Panc1 (cell line): ENCODE measurements at regions of chr12 and their contacts with region 1.

Region 1: GRCh38 chr12:101299931-101300330 is 20.0 kb downstream of the UTP20 start:
- DNase-seq: no peak
- ATAC-seq: no peak
- H3K4me3 ChIP-seq: no peak overlapping the region
- H3K27ac ChIP-seq: no peak overlapping the region
- H3K4me1 ChIP-seq: no peaks in the 10 kb centered on the region
- H3K27me3 ChIP-seq: no peaks in the 10 kb centered on the region
- CTCF ChIP-seq: no peak

Region 2: DNA sequence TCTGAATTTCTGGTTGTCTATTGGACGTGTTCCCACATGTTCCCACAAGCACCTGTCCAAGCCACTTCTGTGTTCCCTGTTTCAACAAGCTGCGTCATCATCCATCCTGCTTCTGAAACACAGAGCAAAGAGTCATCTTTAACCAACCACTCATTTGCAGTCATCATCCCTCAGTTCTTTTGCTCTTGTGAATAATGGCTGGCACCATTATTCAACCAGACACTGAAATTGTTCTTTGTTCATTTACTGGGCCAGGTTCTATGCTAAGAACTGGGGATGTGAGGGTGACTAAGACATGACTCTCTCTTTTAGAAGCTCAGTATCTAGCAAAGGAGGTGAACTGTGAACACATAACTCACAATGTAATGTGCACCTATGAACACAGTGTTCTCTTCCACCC is 546.1 kb before region 1 on chr12:
- CTCF ChIA-PET with region 1: no interaction called
- POLR2A ChIA-PET with region 1: no interaction called
- in situ Hi-C with region 1: no loop called
- intact Hi-C with region 1: no loop called
- DNase-seq: no peak
- ATAC-seq: no peak
- H3K4me3 ChIP-seq: no peak overlapping the region
- H3K27ac ChIP-seq: no peak overlapping the region
- H3K4me1 ChIP-seq: no peaks in the 10 kb centered on the region
- H3K27me3 ChIP-seq: no peaks in the 10 kb centered on the region
- CTCF ChIP-seq: no peak

Region 3: DNA sequence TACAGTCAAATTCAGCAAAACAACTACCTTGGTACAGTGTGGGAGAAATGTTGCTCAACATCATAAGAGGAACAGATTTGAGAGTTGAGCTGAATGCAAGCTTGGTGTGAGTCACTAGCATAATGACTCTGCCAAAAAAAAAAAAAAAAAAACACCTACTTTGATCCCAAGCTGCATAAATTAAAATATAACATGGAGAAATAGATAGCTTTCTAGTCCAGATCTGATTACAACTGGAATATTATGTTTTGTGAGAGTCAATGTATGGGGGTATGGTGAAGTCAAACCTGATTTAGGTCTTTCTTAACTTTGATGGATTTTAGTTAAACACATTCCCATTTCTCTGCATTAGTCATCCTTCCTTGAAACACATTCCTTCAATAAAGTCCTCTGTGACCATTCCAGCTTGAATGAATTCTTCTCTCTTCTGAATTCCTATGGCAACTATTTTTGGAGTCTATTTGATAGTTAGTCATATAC is 278.0 kb before region 1 on chr12:
- CTCF ChIA-PET with region 1: no interaction called
- POLR2A ChIA-PET with region 1: no interaction called
- in situ Hi-C with region 1: no loop called
- intact Hi-C with region 1: no loop called
- DNase-seq: no peak
- ATAC-seq: no peak
- H3K4me3 ChIP-seq: no peak overlapping the region
- H3K27ac ChIP-seq: no peak overlapping the region
- H3K4me1 ChIP-seq: no peaks in the 10 kb centered on the region
- H3K27me3 ChIP-seq: no peaks in the 10 kb centered on the region
- CTCF ChIP-seq: no peak

Region 4: DNA sequence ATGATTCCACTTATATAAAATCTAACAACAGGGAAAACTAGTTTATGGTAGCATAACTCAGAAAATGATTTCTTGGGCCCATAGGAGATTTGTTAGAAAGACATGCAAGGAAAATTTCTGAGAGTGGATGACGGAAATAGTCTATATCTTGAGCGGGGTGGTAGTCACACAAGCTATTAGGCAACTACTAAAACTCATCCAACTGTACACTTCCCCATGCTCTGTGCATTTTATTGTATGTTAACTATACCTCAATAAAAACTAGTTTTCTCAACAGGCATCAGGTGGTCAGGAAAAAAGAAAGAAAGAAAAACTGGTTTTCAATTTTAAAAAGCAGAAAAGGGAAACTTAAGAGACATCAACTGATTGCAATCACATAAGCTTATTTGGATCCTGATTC is 99.8 kb before region 1 on chr12:
- CTCF ChIA-PET with region 1: no interaction called
- POLR2A ChIA-PET with region 1: no interaction called
- in situ Hi-C with region 1: no loop called
- intact Hi-C with region 1: no loop called
- DNase-seq: no peak
- ATAC-seq: no peak
- H3K4me3 ChIP-seq: no peak overlapping the region
- H3K27ac ChIP-seq: no peak overlapping the region
- H3K4me1 ChIP-seq: no peaks in the 10 kb centered on the region
- H3K27me3 ChIP-seq: peaks cover 2% of the 10 kb centered on the region; the same call in 1 of the 2 replicates
- CTCF ChIP-seq: no peak

Region 5: GRCh38 chr12:101356794-101357193 is 56.9 kb after region 1 on chr12:
- CTCF ChIA-PET with region 1: no interaction called
- POLR2A ChIA-PET with region 1: no interaction called
- in situ Hi-C with region 1: no loop called
- intact Hi-C with region 1: loop called (anchors 2 kb)
- DNase-seq: no peak
- ATAC-seq: no peak
- H3K4me3 ChIP-seq: no peak overlapping the region
- H3K27ac ChIP-seq: no peak overlapping the region
- H3K4me1 ChIP-seq: no peaks in the 10 kb centered on the region
- H3K27me3 ChIP-seq: no peaks in the 10 kb centered on the region
- CTCF ChIP-seq: no peak

Region 6: GRCh38 chr12:101368016-101368415 is 68.1 kb after region 1 on chr12:
- CTCF ChIA-PET with region 1: no interaction called
- POLR2A ChIA-PET with region 1: no interaction called
- in situ Hi-C with region 1: no loop called
- intact Hi-C with region 1: no loop called
- DNase-seq: no peak
- ATAC-seq: no peak
- H3K4me3 ChIP-seq: no peak overlapping the region
- H3K27ac ChIP-seq: no peak overlapping the region
- H3K4me1 ChIP-seq: no peaks in the 10 kb centered on the region
- H3K27me3 ChIP-seq: no peaks in the 10 kb centered on the region
- CTCF ChIP-seq: no peak